ENCODE measurements at regions of chr6 and their contacts with region 1.

Region 1: DNA sequence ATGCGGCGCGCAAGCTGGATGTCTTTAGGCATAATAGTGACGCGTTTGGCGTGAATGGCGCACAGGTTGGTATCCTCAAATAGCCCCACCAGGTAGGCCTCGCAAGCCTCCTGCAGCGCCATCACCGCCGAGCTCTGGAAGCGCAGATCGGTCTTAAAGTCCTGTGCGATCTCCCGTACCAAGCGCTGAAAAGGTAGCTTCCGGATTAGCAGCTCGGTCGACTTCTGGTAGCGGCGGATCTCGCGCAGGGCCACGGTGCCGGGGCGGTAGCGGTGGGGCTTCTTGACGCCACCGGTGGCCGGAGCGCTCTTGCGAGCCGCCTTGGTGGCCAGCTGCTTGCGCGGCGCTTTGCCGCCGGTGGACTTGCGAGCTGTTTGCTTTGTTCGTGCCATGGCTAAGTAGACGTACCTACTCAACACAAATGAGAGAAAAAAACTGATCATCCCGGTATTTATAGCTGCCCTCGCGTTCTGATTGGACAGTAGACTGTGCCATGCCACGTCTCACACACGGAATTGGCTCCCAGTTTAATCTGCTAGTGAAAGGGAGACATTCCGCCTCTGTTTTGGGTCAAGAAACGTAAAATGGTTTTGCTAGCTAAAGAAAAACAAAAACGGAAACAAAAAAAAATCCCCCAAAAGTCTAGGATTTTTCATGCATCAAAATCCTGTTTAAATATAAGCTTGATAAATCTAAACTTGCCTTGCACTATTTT is 40.1 kb downstream of the OR2B2 start:
- DNase-seq: peak; percentile 69 to 95 (median 91)
- H3K4me3 ChIP-seq: peak overlapping the region; percentile 71
- H3K4me3 Mint-ChIP-seq: peak overlapping the region; percentile 82 to 95 (median 88)
- H3K27ac ChIP-seq: peak overlapping the region; percentile 71
- H3K27ac Mint-ChIP-seq: peak overlapping the region; percentile 90 to 99 (median 94)
- H3K4me1 ChIP-seq: peaks cover 24% of the 10 kb centered on the region
- H3K4me1 Mint-ChIP-seq: peaks cover 31 to 39% (median 37%) of the 10 kb centered on the region in 3 donors
- H3K27me3 ChIP-seq: no peaks in the 10 kb centered on the region
- H3K27me3 Mint-ChIP-seq: peaks cover 0 to 3% of the 10 kb centered on the region in 2 donors

Region 2: GRCh38 chr6:27132532-27133280 is 739.4 kb before region 1 on chr6:
- CTCF ChIA-PET with region 1: interaction called, 6 read pairs
- POLR2A ChIA-PET with region 1: interaction called, 23 read pairs
- DNase-seq: peak; percentile 77 to 98 (median 96)
- H3K4me3 ChIP-seq: peak overlapping the region; percentile 75
- H3K4me3 Mint-ChIP-seq: no peak overlapping the region
- H3K27ac ChIP-seq: peak overlapping the region; percentile 89
- H3K27ac Mint-ChIP-seq: no peak overlapping the region
- H3K4me1 ChIP-seq: peaks cover 20% of the 10 kb centered on the region
- H3K4me1 Mint-ChIP-seq: peaks cover 7 to 21% (median 16%) of the 10 kb centered on the region in 3 donors
- H3K27me3 ChIP-seq: no peaks in the 10 kb centered on the region
- H3K27me3 Mint-ChIP-seq: peaks cover 0 to 2% of the 10 kb centered on the region in 2 donors

Region 3: GRCh38 chr6:27825025-27825793 is 46.9 kb before region 1 on chr6:
- CTCF ChIA-PET with region 1: interaction called, 12 read pairs
- POLR2A ChIA-PET with region 1: interaction called, 73 read pairs
- DNase-seq: no peak
- H3K4me3 ChIP-seq: peak overlapping the region; percentile 91
- H3K4me3 Mint-ChIP-seq: peak overlapping the region; percentile 82 to 97 (median 90)
- H3K27ac ChIP-seq: peak overlapping the region; percentile 96
- H3K27ac Mint-ChIP-seq: peak overlapping the region; percentile 93 to 100 (median 98)
- H3K4me1 ChIP-seq: peaks cover 14% of the 10 kb centered on the region
- H3K4me1 Mint-ChIP-seq: peaks cover 31 to 42% (median 38%) of the 10 kb centered on the region in 3 donors
- H3K27me3 ChIP-seq: no peaks in the 10 kb centered on the region
- H3K27me3 Mint-ChIP-seq: no peaks in the 10 kb centered on the region

Region 4: GRCh38 chr6:27940766-27941165 is 68.7 kb after region 1 on chr6:
- CTCF ChIA-PET with region 1: no interaction called
- POLR2A ChIA-PET with region 1: no interaction called
- DNase-seq: no peak
- H3K4me3 ChIP-seq: no peak overlapping the region
- H3K4me3 Mint-ChIP-seq: no peak overlapping the region
- H3K27ac ChIP-seq: no peak overlapping the region
- H3K27ac Mint-ChIP-seq: no peak overlapping the region
- H3K4me1 ChIP-seq: no peaks in the 10 kb centered on the region
- H3K4me1 Mint-ChIP-seq: no peaks in the 10 kb centered on the region
- H3K27me3 ChIP-seq: peaks cover 3% of the 10 kb centered on the region
- H3K27me3 Mint-ChIP-seq: peaks cover 21 to 69% of the 10 kb centered on the region in 2 donors

Region 5: DNA sequence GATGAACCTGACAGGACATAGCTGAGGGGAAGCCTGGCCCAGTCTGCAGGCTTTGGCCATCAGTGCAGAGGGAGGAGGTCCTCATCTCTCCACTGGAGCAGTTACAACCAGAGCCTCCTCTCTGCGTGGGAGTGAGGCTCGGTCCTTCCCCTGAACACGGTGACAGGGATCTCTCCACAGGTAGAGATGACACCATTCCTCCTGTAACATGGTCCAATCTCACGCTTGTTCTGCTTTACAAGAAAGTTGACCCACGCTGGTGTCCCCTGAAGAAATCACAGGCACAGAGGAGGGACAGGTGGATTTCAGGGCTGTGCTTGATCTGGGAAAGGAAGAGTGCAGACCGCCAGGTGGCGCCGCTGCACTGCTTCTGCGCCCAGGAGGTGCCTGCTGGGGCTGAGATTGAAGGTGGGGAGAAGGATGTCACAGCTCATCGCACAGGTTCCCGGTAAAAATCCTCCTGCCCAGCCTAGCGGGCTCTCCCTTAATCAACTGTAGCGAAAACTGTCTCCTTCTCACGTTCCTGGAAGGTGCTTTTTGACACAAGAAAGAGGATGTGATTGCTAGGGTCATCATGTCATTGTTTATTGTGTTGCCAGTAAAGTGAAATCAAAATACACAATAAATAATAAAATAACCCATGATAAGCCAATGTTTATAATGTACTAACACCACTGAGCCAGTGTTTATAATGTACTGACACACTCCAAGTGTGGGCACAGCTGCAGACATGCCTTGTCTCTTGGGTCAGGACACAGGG is 1976.0 kb after region 1 on chr6:
- CTCF ChIA-PET with region 1: no interaction called
- POLR2A ChIA-PET with region 1: no interaction called
- DNase-seq: peak; percentile 71 to 88 (median 79)
- H3K4me3 ChIP-seq: no peak overlapping the region
- H3K4me3 Mint-ChIP-seq: peak overlapping the region in 5 of 7 donors; percentile 15 to 45 (median 37)
- H3K27ac ChIP-seq: no peak overlapping the region
- H3K27ac Mint-ChIP-seq: peak overlapping the region in 1 of 8 donors; percentile 40
- H3K4me1 ChIP-seq: no peaks in the 10 kb centered on the region
- H3K4me1 Mint-ChIP-seq: peaks cover 10 to 18% (median 13%) of the 10 kb centered on the region in 3 donors
- H3K27me3 ChIP-seq: peaks cover 33% of the 10 kb centered on the region
- H3K27me3 Mint-ChIP-seq: peaks cover 52 to 72% of the 10 kb centered on the region in 2 donors

Measured in CD8-positive, alpha-beta memory T cell (primary cell).